Motor neuron (in vitro differentiated cells): ENCODE measurements at regions of chr2 and their contacts with region 1.

Region 1: DNA sequence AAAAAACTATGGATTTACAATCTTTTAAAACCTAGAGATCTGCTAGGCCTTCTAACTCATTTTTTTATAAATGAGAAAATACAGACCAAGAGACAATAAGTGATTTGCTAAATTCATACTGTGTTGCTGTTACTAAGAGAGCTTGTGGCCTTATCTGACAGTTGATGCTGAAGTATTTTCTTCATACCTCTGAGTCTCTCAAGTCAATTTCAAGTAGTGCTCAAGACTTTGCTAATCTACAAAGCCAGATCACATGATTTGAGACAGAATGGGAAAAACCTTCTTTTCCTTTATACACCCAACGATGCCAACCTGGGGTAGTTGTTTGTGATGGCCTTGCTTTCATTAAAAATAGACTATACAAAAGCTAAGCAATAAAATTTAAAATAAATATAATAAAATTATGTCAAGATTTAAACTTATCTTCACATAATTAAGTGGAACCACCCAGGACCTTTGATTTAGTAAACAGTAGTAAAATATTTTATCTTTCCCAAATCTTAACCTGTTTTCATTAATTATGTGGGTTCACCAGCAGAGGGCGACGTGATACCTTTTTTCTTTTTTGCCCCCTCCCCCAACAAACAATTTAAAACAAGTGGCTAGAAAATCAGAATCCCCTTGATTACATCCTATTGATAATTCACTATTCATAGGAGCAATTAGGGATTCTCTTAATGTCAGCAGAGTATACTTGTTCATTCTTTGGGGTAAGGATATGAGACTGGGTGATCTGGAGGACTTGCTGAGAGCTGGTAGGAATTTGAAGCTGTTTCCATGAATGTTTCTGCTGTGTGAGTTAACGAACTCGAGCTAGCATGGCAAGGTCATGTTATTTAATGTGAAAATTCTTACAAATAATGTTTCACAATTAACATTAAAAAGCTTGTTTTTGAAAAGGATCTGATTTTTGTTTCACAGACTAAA is 49.6 kb upstream of the SLC5A7 start:
- ATAC-seq: no peak
- H3K4me3 ChIP-seq: no peak overlapping the region
- H3K27ac ChIP-seq: no peak overlapping the region
- H3K4me1 ChIP-seq: peaks cover 0 to 10% of the 10 kb centered on the region in 2 donors

Region 2: DNA sequence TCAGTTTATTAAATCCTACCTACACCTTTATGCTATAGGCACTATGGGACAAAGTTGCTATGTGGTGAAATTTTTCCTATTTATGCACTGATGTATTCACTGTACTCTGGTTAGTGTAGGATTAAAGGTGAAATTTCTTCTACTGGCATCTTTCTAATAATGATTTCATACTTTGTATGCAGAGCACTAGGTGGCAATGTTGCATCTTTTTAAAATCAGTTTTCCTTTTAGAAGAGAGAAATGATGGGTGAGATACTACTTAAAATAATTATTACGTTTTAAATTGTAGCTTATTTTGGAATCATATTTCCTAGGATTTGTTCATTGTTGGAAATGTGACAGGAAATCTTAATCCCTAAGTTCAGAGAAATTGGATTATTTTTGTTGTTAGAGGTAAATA is 1298.7 kb before region 1 on chr2:
- in situ Hi-C with region 1: loop called in 2 of 9 experiments (anchors 25 kb)
- ATAC-seq: peak in 3 of 8 experiments; percentile 34 to 52 (median 38)
- H3K4me3 ChIP-seq: no peak overlapping the region
- H3K27ac ChIP-seq: no peak overlapping the region
- H3K4me1 ChIP-seq: no peaks in the 10 kb centered on the region

Region 3: DNA sequence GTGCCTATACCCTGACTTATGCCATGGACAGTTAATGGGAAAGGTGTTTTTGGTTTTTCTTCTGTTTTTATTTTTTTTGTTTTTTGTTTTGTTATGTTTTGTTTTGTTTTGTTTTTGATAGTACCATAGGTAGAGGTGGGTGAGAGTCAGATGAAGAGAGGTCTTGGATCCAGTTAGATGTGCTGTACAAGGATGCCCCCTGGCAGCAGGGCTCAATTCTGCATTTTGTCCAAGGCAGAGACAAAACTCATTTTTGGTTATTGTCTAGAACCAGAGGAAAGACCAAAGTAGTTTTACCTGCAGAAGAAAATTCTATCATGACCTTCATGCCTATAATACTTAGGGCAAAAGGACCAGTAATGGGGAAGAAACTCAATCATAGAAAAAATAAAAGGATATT is 98.2 kb after region 1 on chr2:
- in situ Hi-C with region 1: loop called in 1 of 9 experiments (anchors 10 kb)
- ATAC-seq: peak in 2 of 8 experiments; percentile 25 to 61
- H3K4me3 ChIP-seq: no peak overlapping the region
- H3K27ac ChIP-seq: no peak overlapping the region
- H3K4me1 ChIP-seq: peaks cover 0 to under 1% of the 10 kb centered on the region in 2 donors

Region 4: DNA sequence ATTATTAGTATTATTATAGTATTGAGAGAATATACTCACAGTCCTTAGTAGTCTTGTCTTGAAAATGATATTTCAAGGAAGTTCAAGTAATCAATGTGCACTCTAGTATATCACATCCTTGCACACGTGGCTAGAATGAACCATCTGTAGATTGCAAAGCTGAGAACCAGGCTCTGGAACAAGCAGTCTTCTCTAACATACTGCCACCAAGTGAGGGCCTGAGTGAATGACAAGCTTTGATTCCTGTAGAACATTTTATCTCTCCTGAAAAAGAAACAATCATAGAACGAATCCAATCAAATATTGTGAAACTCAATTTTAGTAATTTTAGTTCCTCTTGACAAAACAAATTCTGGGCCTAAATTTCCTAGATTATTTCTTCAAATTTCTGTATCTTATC is 247.7 kb after region 1 on chr2:
- in situ Hi-C with region 1: loop called in 5 of 9 experiments (anchors 10 to 25 kb)
- ATAC-seq: peak in 4 of 8 experiments; percentile 20 to 71 (median 68)
- H3K4me3 ChIP-seq: no peak overlapping the region
- H3K27ac ChIP-seq: no peak overlapping the region
- H3K4me1 ChIP-seq: no peaks in the 10 kb centered on the region